ENCODE measurements at regions of chr7 and their contacts with region 1.

Region 1: GRCh38 chr7:121395961-121396757 is at the start of gene FAM3C:
- DNase-seq: peak; percentile 69 to 83 (median 72)
- H3K4me3 ChIP-seq: peak within 1 kb of the TSS in 1 of 2 donors; percentile 60
- H3K4me3 Mint-ChIP-seq: peak within 1 kb of the TSS; percentile 87 to 92 (median 88)
- H3K27ac ChIP-seq: peak within 1 kb of the TSS; percentile 62
- H3K27ac Mint-ChIP-seq: peak within 1 kb of the TSS; percentile 61 to 90 (median 88)
- H3K4me1 ChIP-seq: peaks cover 13% of the 10 kb centered on the region
- H3K4me1 Mint-ChIP-seq: peaks cover 12 to 38% (median 20%) of the 10 kb centered on the region in 4 donors
- H3K27me3 ChIP-seq: no peaks in the 10 kb centered on the region
- H3K27me3 Mint-ChIP-seq: no peaks in the 10 kb centered on the region
- total RNA-seq, gene FAM3C: 19.9 to 20.9 TPM

Region 2: DNA sequence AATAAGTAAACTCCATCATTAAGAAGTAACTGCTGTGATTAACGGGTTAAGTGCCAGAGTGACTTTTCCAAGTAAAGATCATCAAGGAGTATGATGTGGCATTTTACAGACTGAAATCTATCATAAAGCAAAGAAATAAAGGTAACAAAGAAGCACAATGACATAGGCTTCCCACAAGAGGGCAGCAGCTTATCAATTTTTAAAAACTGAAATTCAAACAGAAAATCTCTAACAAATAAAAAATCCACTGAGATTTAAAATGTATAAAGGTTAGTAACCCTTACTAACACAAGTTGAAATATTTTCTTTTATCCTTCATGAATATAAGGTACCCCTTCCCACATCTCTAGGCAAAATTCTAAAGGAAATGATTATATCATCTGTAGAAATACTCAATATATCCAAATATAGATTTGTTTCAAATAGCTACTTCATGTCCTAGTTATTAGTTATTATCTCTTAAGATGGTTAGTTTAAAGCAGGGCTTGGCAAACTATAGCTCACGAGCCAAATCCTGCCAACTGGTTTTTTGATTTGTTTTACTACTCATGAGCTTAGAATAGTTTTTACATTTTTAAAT is 29.2 kb before region 1 on chr7:
- CTCF ChIA-PET with region 1: interaction called, 73 read pairs
- POLR2A ChIA-PET with region 1: interaction called, 5 read pairs
- intact Hi-C with region 1: loop called (anchors 1 kb)
- DNase-seq: peak in 4 of 5 donors; percentile 48 to 56 (median 56)
- H3K4me3 ChIP-seq: no peak overlapping the region
- H3K4me3 Mint-ChIP-seq: no peak overlapping the region
- H3K27ac ChIP-seq: no peak overlapping the region
- H3K27ac Mint-ChIP-seq: peak overlapping the region in 1 of 7 donors; percentile 59
- H3K4me1 ChIP-seq: peaks cover 6% of the 10 kb centered on the region
- H3K4me1 Mint-ChIP-seq: peaks cover 5 to 11% (median 7%) of the 10 kb centered on the region in 4 donors
- H3K27me3 ChIP-seq: no peaks in the 10 kb centered on the region
- H3K27me3 Mint-ChIP-seq: no peaks in the 10 kb centered on the region

Region 3: GRCh38 chr7:121385800-121386179 is 10.4 kb before region 1 on chr7:
- CTCF ChIA-PET with region 1: interaction called, 78 read pairs
- POLR2A ChIA-PET with region 1: interaction called, 6 read pairs
- intact Hi-C with region 1: no loop called
- DNase-seq: peak; percentile 7 to 47 (median 18)
- H3K4me3 ChIP-seq: no peak overlapping the region
- H3K4me3 Mint-ChIP-seq: peak overlapping the region in 2 of 8 donors; percentile 21 to 43
- H3K27ac ChIP-seq: no peak overlapping the region
- H3K27ac Mint-ChIP-seq: peak overlapping the region in 3 of 7 donors; percentile 4 to 53 (median 33)
- H3K4me1 ChIP-seq: peaks cover 50% of the 10 kb centered on the region
- H3K4me1 Mint-ChIP-seq: peaks cover 50 to 67% (median 64%) of the 10 kb centered on the region in 4 donors
- H3K27me3 ChIP-seq: no peaks in the 10 kb centered on the region
- H3K27me3 Mint-ChIP-seq: no peaks in the 10 kb centered on the region

Region 4: DNA sequence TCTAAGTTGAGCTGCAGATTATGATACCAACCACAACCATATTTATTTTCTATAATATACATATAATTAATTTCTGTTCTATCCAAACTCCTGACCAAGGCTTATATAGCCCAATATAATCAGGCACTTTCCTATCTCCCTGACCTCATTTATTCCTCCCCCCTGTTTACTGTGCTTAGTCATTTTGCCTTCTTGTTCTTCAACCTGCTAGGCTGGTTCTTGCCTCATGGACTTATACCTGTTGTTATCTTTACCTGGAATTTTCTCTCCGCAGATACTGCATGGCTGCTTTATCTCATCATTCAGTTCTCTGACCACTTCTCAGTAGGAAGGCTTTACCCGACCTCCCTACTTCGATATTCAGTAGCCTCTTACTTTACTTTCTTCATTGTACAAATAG is 24.8 kb after region 1 on chr7:
- CTCF ChIA-PET with region 1: interaction called, 25 read pairs
- POLR2A ChIA-PET with region 1: no interaction called
- intact Hi-C with region 1: no loop called
- DNase-seq: no peak
- H3K4me3 ChIP-seq: no peak overlapping the region
- H3K4me3 Mint-ChIP-seq: no peak overlapping the region
- H3K27ac ChIP-seq: no peak overlapping the region
- H3K27ac Mint-ChIP-seq: no peak overlapping the region
- H3K4me1 ChIP-seq: no peaks in the 10 kb centered on the region
- H3K4me1 Mint-ChIP-seq: no peaks in the 10 kb centered on the region
- H3K27me3 ChIP-seq: no peaks in the 10 kb centered on the region
- H3K27me3 Mint-ChIP-seq: peaks cover 4 to 7% of the 10 kb centered on the region in 2 donors

Region 5: GRCh38 chr7:121442845-121443244 is 46.7 kb after region 1 on chr7:
- CTCF ChIA-PET with region 1: interaction called, 55 read pairs
- POLR2A ChIA-PET with region 1: interaction called, 25 read pairs
- intact Hi-C with region 1: loop called (anchors 1 kb)
- DNase-seq: peak; percentile 29 to 73 (median 59)
- H3K4me3 ChIP-seq: no peak overlapping the region
- H3K4me3 Mint-ChIP-seq: peak overlapping the region in 3 of 8 donors; percentile 3 to 39 (median 7)
- H3K27ac ChIP-seq: peak overlapping the region; percentile 3
- H3K27ac Mint-ChIP-seq: peak overlapping the region in 6 of 7 donors; percentile 45 to 89 (median 84)
- H3K4me1 ChIP-seq: peaks cover 20% of the 10 kb centered on the region
- H3K4me1 Mint-ChIP-seq: peaks cover 24 to 45% (median 36%) of the 10 kb centered on the region in 4 donors
- H3K27me3 ChIP-seq: no peaks in the 10 kb centered on the region
- H3K27me3 Mint-ChIP-seq: no peaks in the 10 kb centered on the region

Region 6: DNA sequence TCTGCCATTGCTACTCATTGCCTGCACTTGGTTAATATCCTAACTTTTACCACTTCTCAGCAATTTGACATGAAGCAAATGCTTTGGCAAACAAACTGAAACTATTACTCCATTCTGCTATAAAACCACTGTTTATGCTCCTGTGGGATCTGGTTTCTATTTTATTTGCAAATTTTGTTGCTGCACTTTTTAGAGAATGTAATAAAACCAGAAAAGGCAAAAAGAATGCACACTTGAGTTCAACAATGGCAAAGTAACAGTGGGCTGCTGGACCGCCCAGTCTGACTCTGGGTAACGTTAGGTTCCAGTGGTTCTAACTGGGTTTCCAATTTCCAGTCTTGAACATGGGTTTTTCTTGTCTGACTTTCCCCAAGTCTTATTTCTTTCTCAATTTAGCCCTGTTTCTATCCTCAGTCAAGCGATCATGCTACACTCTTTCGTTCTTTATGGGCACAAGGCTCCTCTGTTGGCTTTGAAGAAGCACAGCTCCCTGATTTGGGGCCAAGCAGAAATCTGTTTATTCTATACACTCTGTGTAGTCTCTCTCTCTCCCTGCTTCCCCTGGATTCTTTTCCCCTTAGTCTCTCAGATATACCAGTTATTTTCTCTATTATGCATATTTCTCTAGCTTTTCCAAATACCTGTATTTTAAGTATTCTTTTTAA is 129.1 kb after region 1 on chr7:
- CTCF ChIA-PET with region 1: interaction called, 10 read pairs
- POLR2A ChIA-PET with region 1: interaction called, 3 read pairs
- intact Hi-C with region 1: no loop called
- DNase-seq: no peak
- H3K4me3 ChIP-seq: no peak overlapping the region
- H3K4me3 Mint-ChIP-seq: no peak overlapping the region
- H3K27ac ChIP-seq: no peak overlapping the region
- H3K27ac Mint-ChIP-seq: no peak overlapping the region
- H3K4me1 ChIP-seq: no peaks in the 10 kb centered on the region
- H3K4me1 Mint-ChIP-seq: peaks cover 2 to 6% (median 2%) of the 10 kb centered on the region in 4 donors
- H3K27me3 ChIP-seq: no peaks in the 10 kb centered on the region
- H3K27me3 Mint-ChIP-seq: peaks cover 0 to 2% of the 10 kb centered on the region in 2 donors

Region 7: GRCh38 chr7:122188784-122189183 is 792.6 kb after region 1 on chr7:
- CTCF ChIA-PET with region 1: no interaction called
- POLR2A ChIA-PET with region 1: no interaction called
- intact Hi-C with region 1: no loop called
- DNase-seq: no peak
- H3K4me3 ChIP-seq: no peak overlapping the region
- H3K4me3 Mint-ChIP-seq: no peak overlapping the region
- H3K27ac ChIP-seq: no peak overlapping the region
- H3K27ac Mint-ChIP-seq: no peak overlapping the region
- H3K4me1 ChIP-seq: no peaks in the 10 kb centered on the region
- H3K4me1 Mint-ChIP-seq: no peaks in the 10 kb centered on the region
- H3K27me3 ChIP-seq: no peaks in the 10 kb centered on the region
- H3K27me3 Mint-ChIP-seq: no peaks in the 10 kb centered on the region

Measured in CD4-positive, alpha-beta memory T cell (primary cell).